WTC11 (cell line): ENCODE measurements at regions of chr4 and their contacts with region 1.

Region 1: DNA sequence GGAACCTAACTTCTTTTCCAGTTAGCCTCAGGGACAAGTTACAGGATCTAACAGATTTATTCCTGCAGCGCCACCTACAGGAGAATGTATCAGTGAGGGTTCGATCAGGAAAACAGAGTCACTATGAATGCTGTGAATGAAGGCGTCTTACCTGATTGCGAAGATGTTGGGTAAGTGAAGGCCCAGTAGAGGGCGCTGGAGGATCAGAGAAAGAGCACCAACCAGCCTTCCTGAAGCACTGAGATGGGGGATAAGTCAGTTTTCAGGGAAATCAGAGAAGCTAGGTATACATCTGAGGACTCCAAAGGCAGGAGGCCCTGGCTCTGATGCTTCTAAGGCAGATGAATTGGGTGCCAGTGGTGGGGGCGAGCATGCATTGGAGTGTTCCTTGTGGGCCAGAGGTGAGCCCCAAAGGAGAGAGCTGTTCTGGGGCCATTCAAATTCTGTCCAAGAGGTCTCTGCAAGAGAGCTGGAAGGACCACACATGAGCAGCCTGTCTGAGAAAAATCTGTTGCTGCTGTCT is 169.9 kb upstream of the AADAT start:
- DNase-seq: peak; percentile 93
- ATAC-seq: peak; percentile 99
- H3K4me3 Mint-ChIP-seq: no peak overlapping the region
- H3K27ac Mint-ChIP-seq: no peak overlapping the region
- H3K4me1 Mint-ChIP-seq: peaks cover 12% of the 10 kb centered on the region
- H3K27me3 Mint-ChIP-seq: no peaks in the 10 kb centered on the region
- CTCF ChIP-seq: peak; percentile 94

Region 2: GRCh38 chr4:170190265-170190664 is 69.4 kb before region 1 on chr4:
- CTCF ChIA-PET with region 1: interaction called, 12 read pairs
- POLR2A ChIA-PET with region 1: no interaction called
- DNase-seq: no peak
- ATAC-seq: no peak
- H3K4me3 Mint-ChIP-seq: no peak overlapping the region
- H3K27ac Mint-ChIP-seq: no peak overlapping the region
- H3K4me1 Mint-ChIP-seq: peaks cover 28% of the 10 kb centered on the region
- H3K27me3 Mint-ChIP-seq: peaks cover 6% of the 10 kb centered on the region; the same call in 1 of the 2 replicates
- CTCF ChIP-seq: no peak

Region 3: DNA sequence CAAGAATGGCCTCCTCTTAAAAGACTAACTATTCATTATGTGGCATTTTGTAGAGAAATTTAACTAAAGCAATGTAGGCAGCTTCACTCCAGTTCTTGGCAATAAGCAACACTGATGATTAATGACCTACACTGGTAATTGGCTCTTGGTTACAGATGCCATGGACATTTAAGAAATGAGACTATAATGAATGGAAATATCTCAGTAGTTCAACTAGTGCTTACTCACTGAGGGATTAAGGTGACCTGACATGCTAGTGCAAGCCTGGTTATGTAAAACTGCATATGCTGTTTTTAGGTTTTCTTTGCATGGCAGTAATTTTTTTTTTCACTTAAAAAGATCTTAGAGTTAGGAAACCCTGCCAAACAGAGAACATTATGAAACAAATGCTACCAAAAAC is 17.2 kb before region 1 on chr4:
- CTCF ChIA-PET with region 1: interaction called, 21 read pairs
- POLR2A ChIA-PET with region 1: no interaction called
- DNase-seq: no peak
- ATAC-seq: no peak
- H3K4me3 Mint-ChIP-seq: no peak overlapping the region
- H3K27ac Mint-ChIP-seq: no peak overlapping the region
- H3K4me1 Mint-ChIP-seq: peaks cover 12% of the 10 kb centered on the region
- H3K27me3 Mint-ChIP-seq: no peaks in the 10 kb centered on the region
- CTCF ChIP-seq: no peak

Region 4: DNA sequence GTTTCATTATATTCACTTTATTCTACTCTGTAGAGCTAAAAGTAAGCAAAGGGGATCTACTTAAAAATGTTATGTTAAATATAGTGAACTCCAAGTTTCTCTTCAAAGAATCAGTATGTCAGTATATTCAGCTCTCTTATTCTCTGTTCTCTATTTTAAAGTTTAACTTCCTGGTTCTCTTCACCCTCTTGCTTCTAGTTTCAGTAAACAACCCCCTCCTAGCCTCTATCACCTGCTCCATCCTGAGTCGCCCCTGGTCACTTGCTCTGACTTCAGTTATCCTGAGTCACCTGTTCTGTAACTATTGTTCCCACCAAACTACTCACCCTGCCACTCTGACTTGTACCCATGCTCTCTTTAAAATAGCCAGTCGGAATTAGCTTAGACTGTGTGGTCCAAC is 10.9 kb after region 1 on chr4:
- CTCF ChIA-PET with region 1: interaction called, 38 read pairs
- POLR2A ChIA-PET with region 1: no interaction called
- DNase-seq: no peak
- ATAC-seq: no peak
- H3K4me3 Mint-ChIP-seq: no peak overlapping the region
- H3K27ac Mint-ChIP-seq: no peak overlapping the region
- H3K4me1 Mint-ChIP-seq: peaks cover 5% of the 10 kb centered on the region; the same call in 1 of the 2 replicates
- H3K27me3 Mint-ChIP-seq: no peaks in the 10 kb centered on the region
- CTCF ChIP-seq: no peak

Region 5: DNA sequence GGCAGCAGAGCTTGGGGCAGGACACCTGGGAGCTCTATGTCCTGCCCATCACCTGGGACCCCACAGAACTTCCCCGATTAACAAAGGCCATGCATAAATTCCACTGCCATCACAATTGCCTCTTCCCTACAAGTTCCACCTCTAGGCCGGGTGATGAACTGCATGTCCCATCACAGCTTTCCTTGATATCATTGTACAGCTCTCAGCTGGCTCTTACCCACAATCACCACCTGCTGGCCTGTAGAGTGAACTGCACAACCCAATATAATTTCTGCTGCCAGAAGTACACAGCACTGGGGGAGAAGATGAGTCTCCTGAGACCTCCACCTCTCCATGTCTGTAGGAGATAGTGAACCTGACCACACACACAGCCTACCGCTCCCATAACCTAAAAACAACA is 115.1 kb after region 1 on chr4:
- CTCF ChIA-PET with region 1: interaction called, 44 read pairs
- POLR2A ChIA-PET with region 1: no interaction called
- DNase-seq: peak; percentile 64
- ATAC-seq: peak; percentile 100
- H3K4me3 Mint-ChIP-seq: no peak overlapping the region
- H3K27ac Mint-ChIP-seq: no peak overlapping the region
- H3K4me1 Mint-ChIP-seq: no peaks in the 10 kb centered on the region
- H3K27me3 Mint-ChIP-seq: no peaks in the 10 kb centered on the region
- CTCF ChIP-seq: peak; percentile 82

Region 6: DNA sequence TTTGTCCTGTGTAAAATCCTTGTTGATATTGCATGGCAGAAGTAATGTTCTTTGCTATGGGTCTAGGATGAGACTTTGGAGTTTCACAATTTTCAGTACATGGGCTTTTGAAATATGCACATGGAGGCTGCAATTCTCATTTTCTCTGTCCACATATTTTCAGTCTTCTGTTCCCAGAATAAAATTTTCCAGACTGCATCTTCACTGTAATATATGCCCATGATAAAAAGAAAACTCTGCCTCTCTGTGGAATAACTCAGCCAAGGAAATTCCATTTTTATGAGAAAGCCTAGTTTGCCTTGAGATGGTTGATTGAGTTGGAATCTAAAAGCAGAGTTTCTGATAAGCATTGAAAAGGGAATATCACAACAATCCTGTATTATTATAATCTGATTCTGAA is 431.5 kb after region 1 on chr4:
- CTCF ChIA-PET with region 1: no interaction called
- POLR2A ChIA-PET with region 1: no interaction called
- DNase-seq: no peak
- ATAC-seq: no peak
- H3K4me3 Mint-ChIP-seq: no peak overlapping the region
- H3K27ac Mint-ChIP-seq: no peak overlapping the region
- H3K4me1 Mint-ChIP-seq: 0 out of 2 replicates have a peak, but pooled peaks cover 3% of the 10 kb centered on the region
- H3K27me3 Mint-ChIP-seq: no peaks in the 10 kb centered on the region
- CTCF ChIP-seq: no peak

Region 7: GRCh38 chr4:170853422-170854021 is 593.8 kb after region 1 on chr4:
- CTCF ChIA-PET with region 1: interaction called, 15 read pairs
- POLR2A ChIA-PET with region 1: no interaction called
- DNase-seq: peak; percentile 68
- ATAC-seq: peak; percentile 99
- H3K4me3 Mint-ChIP-seq: no peak overlapping the region
- H3K27ac Mint-ChIP-seq: no peak overlapping the region
- H3K4me1 Mint-ChIP-seq: peaks cover 3% of the 10 kb centered on the region; the same call in 1 of the 2 replicates
- H3K27me3 Mint-ChIP-seq: no peaks in the 10 kb centered on the region
- CTCF ChIP-seq: peak; percentile 74